Posterior vena cava (tissue), 2 donors: ENCODE measurements at regions of chr15 and their contacts with region 1.

Region 1: DNA sequence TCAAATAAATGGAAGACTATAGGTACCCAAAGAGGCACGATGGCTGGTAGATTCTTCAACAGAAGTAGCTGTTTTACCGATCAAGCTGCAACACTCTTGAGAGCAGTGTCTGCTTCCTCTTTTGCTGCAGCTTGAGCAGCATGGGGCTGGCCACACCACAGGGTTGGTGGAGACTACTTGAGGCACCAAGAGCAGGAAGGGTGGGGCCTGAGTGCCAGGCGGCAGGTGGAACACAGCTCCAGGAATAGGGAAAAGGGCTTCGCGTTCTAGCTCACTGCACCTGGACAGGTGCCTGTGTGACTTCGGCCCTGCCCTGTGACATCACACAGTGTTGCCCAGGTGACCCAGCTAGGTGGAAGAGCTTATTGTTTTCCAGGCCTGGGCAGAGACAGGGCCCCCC is at the start of gene CCDC33:
- DNase-seq: no peak
- total RNA-seq, gene CCDC33: not detected

Region 2: GRCh38 chr15:74302821-74303359 is 66.9 kb after region 1 on chr15:
- intact Hi-C with region 1: loop called in 1 of 2 experiments (anchors 2 kb)
- DNase-seq: no peak

Region 3: DNA sequence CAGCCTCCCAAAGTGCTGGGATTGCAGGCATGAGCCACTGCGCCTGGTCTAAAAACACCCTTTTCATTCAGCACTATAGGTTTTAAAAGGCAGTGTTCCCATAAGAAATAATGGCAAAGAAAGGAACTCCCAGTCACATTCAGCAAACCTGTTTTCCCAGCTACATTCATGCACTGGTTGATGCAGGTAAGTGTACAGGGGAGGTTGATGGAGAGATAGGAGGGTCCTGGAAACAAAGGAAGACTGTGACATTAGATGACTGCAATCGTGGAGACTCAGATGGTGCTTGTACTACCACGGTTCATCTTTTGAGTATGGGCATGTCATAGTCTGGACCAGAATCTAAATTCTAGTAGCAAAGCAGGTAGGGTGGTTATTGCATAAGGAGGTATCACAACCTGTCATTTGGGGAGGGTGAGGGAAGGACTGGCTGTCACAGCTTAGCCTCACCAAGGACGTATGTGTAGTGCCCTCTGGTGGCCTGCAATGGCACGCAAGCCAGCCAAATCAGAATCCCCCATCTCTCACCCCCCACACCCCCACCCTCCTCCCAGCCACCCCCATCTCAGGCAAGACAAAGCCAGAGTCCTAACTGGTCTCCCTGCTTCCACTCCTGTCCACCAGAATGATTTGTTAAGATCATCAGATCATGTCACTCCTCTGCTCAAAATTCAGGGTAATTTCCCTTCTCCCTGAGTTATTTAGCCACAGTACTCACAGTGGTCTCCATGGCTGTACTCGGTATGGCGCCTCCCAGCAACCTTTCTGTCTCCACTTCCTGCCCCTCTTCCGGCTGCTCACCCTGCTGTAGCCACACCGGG is 253.8 kb after region 1 on chr15:
- intact Hi-C with region 1: no loop called
- DNase-seq: no peak